Activated CD4-positive, alpha-beta T cell treated with anti-CD3 and anti-CD28 coated beads for 36 hours (primary cell): ENCODE measurements at regions of chr16 and their contacts with region 1.

Region 1: GRCh38 chr16:11915644-11916523 is at the start of gene GSPT1:
- DNase-seq: peak; percentile 100
- ATAC-seq: peak; percentile 89
- H3K4me3 Mint-ChIP-seq: peak within 1 kb of the TSS; percentile 89
- H3K27ac Mint-ChIP-seq: peak within 1 kb of the TSS; percentile 96
- H3K4me1 Mint-ChIP-seq: peaks cover 32% of the 10 kb centered on the region
- H3K27me3 Mint-ChIP-seq: no peaks in the 10 kb centered on the region
- total RNA-seq, gene GSPT1: 234 to 260 TPM

Region 2: DNA sequence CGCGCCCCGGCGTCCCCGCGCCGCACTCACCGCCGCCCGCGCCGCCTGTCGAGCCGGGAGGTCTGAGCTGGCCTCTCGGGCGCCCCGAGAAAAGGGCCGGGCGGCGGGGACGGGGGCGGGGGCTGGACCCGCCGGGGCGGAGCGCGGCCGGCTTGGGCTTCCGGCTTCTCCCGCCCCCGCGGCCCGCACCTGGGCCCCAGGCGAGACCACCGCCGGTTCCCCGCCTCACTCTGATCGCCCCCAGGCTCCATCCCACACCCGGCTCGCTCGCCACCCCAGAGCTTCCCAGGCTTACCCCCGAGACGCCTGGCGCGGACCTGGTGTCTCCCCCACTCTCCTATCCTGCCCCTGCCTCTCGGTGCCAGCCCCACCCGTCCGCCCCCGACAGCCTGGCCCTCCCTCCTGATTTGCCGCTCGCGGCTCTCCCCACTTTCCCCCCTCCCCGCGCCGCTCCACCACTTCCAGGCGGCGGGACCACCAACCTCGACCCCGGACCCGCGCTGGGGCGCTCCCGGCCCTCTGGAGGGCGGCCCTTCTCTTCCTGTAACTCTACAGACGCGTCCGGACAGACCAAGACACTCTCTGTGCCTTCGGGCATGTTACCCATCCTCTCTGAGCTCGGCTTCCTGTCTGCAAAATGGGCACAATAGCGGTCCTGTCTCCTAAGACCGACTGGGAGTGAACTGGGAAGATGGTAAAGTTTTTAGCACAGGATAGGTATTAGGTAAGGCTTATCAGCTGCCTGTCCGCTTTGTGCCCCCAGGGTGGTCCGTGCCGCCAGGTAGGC is 328.8 kb before region 1 on chr16 and contains the start of gene LITAF:
- CTCF ChIA-PET with region 1: no interaction called
- POLR2A ChIA-PET with region 1: no interaction called
- intact Hi-C with region 1: loop called (anchors 2 to 10 kb)
- DNase-seq: peak; percentile 74
- ATAC-seq: peak; percentile 53
- H3K4me3 Mint-ChIP-seq: peak within 1 kb of the TSS; percentile 89
- H3K27ac Mint-ChIP-seq: peak within 1 kb of the TSS; percentile 90
- H3K4me1 Mint-ChIP-seq: peaks cover 32% of the 10 kb centered on the region
- H3K27me3 Mint-ChIP-seq: no peaks in the 10 kb centered on the region
- total RNA-seq, gene LITAF: 99.0 to 116 TPM

Region 3: DNA sequence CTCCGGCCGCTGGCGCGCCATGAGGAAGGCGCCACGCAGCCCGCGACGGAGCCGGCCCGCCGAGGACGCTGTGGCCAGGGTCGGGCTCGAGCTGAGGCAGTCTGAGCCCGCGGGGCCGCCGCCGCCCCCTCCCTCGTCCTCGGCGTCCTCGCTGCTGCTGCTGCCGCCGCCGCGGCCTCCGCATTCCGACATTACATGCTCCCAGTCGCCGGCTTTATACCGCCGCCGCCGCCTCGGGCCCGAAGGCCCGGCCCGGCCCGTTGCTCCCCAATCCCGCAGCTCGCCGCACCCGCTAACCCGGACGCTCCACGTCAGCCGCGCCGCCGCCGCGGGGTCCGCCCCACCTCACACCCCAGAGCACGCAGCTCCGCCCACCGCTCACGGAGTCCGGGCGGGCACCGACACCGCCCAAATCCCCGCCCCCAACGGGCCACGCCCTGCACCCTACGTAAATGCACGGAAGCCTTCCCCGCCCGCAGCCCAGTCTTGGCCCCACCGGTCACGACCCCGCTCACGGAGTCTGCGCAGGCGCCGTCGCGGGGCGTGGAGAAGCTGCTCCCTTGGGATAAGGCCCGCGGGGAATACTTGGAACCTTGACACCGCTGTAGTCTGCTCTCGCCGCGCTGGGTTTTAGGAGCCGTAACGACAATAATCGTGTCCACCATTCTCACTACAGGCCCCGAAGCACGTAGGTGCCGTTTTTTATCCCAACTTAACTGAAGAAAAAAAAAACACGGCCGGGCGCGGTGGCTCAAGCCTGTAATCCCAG is 173.2 kb before region 1 on chr16 and contains the start of gene TXNDC11:
- CTCF ChIA-PET with region 1: interaction called, 3 read pairs
- POLR2A ChIA-PET with region 1: interaction called, 5 read pairs
- intact Hi-C with region 1: loop called in 1 of 2 experiments (anchors 1 kb)
- DNase-seq: peak; percentile 100
- ATAC-seq: peak; percentile 92
- H3K4me3 Mint-ChIP-seq: peak within 1 kb of the TSS; percentile 88
- H3K27ac Mint-ChIP-seq: peak within 1 kb of the TSS; percentile 96
- H3K4me1 Mint-ChIP-seq: peaks cover 50% of the 10 kb centered on the region
- H3K27me3 Mint-ChIP-seq: no peaks in the 10 kb centered on the region
- total RNA-seq, gene TXNDC11: 27.3 to 28.3 TPM

Region 4: GRCh38 chr16:11851294-11852091 is 64.4 kb before region 1 on chr16 and contains the start of gene RSL1D1:
- CTCF ChIA-PET with region 1: interaction called, 4 read pairs
- POLR2A ChIA-PET with region 1: interaction called, 3 read pairs
- intact Hi-C with region 1: loop called (anchors 1 kb)
- DNase-seq: peak; percentile 96
- ATAC-seq: peak; percentile 85
- H3K4me3 Mint-ChIP-seq: peak within 1 kb of the TSS; percentile 99
- H3K27ac Mint-ChIP-seq: peak within 1 kb of the TSS; percentile 96
- H3K4me1 Mint-ChIP-seq: peaks cover 52% of the 10 kb centered on the region
- H3K27me3 Mint-ChIP-seq: no peaks in the 10 kb centered on the region
- total RNA-seq, gene RSL1D1: 369 to 466 TPM

Region 5: DNA sequence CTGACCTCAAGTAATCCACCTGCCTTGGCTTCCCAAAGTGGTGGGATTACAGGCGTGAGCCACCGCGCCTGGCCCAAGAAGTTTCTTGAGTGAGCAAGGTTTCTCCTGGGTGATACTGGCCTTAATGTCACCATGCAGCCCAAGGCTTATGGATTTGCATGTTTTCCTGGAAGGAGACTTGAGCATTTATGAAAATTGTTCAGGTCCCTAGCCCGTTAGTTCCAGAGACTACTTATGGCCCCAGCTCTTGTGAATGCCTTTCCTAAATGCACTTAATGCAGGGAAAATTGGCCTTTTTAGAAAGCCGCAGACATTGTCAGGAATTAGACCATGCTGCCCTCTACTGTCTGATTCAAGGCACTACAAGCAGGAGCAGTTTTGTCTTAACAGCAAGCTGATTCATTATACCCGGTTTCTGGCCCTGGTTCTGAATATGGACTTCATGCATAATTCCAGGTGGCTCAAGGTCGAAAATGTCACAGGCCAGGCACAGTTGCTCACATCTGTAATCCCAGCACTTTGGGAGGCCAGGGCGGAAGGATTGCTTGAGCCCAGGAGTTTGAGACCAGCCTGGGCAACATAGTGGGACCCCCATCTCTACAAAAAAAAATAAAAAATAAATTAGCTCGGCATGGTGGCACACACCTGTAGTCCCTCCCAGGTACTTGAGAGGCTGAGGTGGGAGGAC is 152.0 kb after region 1 on chr16:
- CTCF ChIA-PET with region 1: no interaction called
- POLR2A ChIA-PET with region 1: no interaction called
- intact Hi-C with region 1: loop called in 1 of 2 experiments (anchors 10 kb)
- DNase-seq: peak; percentile 67
- ATAC-seq: peak; percentile 83
- H3K4me3 Mint-ChIP-seq: no peak overlapping the region
- H3K27ac Mint-ChIP-seq: no peak overlapping the region
- H3K4me1 Mint-ChIP-seq: no peaks in the 10 kb centered on the region
- H3K27me3 Mint-ChIP-seq: no peaks in the 10 kb centered on the region

Region 6: GRCh38 chr16:12803203-12804097 is 887.6 kb after region 1 on chr16 and contains the start of gene CPPED1:
- CTCF ChIA-PET with region 1: no interaction called
- POLR2A ChIA-PET with region 1: no interaction called
- intact Hi-C with region 1: loop called in 1 of 2 experiments (anchors 1 kb)
- DNase-seq: peak; percentile 95
- ATAC-seq: peak; percentile 93
- H3K4me3 Mint-ChIP-seq: peak within 1 kb of the TSS; percentile 97
- H3K27ac Mint-ChIP-seq: peak within 1 kb of the TSS; percentile 92
- H3K4me1 Mint-ChIP-seq: peaks cover 28% of the 10 kb centered on the region
- H3K27me3 Mint-ChIP-seq: no peaks in the 10 kb centered on the region
- total RNA-seq, gene CPPED1: 8.0 to 9.8 TPM